Activated T-helper 1 cell treated with anti-CD3 and anti-CD28 coated beads, Interleukin-12 subunit alpha, Interleukin-12 subunit beta, Interleukin-2, Interleukin-4 antibody, amounts not matched to agents 30 ng/mL and 10 ng/mL and 1 ng/mL, durations not matched to agents 14 hours and 24 hours and 36 hours (primary cell): ENCODE measurements at regions of chr10 and their contacts with region 1.

Region 1: DNA sequence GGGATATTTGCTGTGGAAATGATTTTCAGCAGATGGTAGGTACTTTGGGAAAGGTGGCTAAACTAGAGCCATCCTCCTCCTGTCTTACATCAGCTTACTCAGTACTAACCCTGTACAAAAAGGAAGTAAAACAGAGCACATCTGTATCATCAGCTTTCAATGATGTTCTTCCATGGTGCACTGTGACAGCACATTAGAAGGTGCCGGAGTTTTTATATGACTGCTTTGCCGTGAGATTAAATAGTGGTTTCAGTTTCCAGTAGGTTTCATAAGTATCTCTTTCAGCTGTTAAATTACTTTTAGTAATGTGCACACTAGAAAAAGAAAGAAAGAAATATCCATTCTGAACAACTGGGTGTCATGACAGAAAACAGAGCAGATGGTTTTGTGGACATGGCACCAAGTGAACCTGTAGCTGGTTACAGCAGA is 86.5 kb downstream of the ARID5B start:
- DNase-seq: peak; percentile 33
- H3K4me3 Mint-ChIP-seq: peak overlapping the region; percentile 78
- H3K27ac Mint-ChIP-seq: peak overlapping the region; percentile 99
- H3K4me1 Mint-ChIP-seq: peaks cover 87% of the 10 kb centered on the region
- H3K27me3 Mint-ChIP-seq: no peaks in the 10 kb centered on the region

Region 2: GRCh38 chr10:61760943-61761824 is 226.8 kb before region 1 on chr10:
- intact Hi-C with region 1: no loop called
- DNase-seq: no peak
- H3K4me3 Mint-ChIP-seq: no peak overlapping the region
- H3K27ac Mint-ChIP-seq: no peak overlapping the region
- H3K4me1 Mint-ChIP-seq: peaks cover 16% of the 10 kb centered on the region
- H3K27me3 Mint-ChIP-seq: no peaks in the 10 kb centered on the region

Region 3: GRCh38 chr10:61961278-61961677 is 26.7 kb before region 1 on chr10:
- intact Hi-C with region 1: loop called (anchors 1 kb)
- DNase-seq: peak; percentile 24
- H3K4me3 Mint-ChIP-seq: peak overlapping the region; percentile 21
- H3K27ac Mint-ChIP-seq: peak overlapping the region; percentile 71
- H3K4me1 Mint-ChIP-seq: peaks cover 86% of the 10 kb centered on the region
- H3K27me3 Mint-ChIP-seq: no peaks in the 10 kb centered on the region

Region 4: GRCh38 chr10:61974601-61975390 is 13.2 kb before region 1 on chr10:
- intact Hi-C with region 1: loop called (anchors 1 kb)
- DNase-seq: no peak
- H3K4me3 Mint-ChIP-seq: no peak overlapping the region
- H3K27ac Mint-ChIP-seq: no peak overlapping the region
- H3K4me1 Mint-ChIP-seq: peaks cover 57% of the 10 kb centered on the region
- H3K27me3 Mint-ChIP-seq: no peaks in the 10 kb centered on the region

Region 5: GRCh38 chr10:62019685-62020315 is 31.8 kb after region 1 on chr10:
- intact Hi-C with region 1: loop called (anchors 1 kb)
- DNase-seq: no peak
- H3K4me3 Mint-ChIP-seq: peak overlapping the region; percentile 61
- H3K27ac Mint-ChIP-seq: peak overlapping the region; percentile 94
- H3K4me1 Mint-ChIP-seq: peaks cover 66% of the 10 kb centered on the region
- H3K27me3 Mint-ChIP-seq: no peaks in the 10 kb centered on the region